ENCODE measurements at regions of chr2 and their contacts with region 1.

Region 1: DNA sequence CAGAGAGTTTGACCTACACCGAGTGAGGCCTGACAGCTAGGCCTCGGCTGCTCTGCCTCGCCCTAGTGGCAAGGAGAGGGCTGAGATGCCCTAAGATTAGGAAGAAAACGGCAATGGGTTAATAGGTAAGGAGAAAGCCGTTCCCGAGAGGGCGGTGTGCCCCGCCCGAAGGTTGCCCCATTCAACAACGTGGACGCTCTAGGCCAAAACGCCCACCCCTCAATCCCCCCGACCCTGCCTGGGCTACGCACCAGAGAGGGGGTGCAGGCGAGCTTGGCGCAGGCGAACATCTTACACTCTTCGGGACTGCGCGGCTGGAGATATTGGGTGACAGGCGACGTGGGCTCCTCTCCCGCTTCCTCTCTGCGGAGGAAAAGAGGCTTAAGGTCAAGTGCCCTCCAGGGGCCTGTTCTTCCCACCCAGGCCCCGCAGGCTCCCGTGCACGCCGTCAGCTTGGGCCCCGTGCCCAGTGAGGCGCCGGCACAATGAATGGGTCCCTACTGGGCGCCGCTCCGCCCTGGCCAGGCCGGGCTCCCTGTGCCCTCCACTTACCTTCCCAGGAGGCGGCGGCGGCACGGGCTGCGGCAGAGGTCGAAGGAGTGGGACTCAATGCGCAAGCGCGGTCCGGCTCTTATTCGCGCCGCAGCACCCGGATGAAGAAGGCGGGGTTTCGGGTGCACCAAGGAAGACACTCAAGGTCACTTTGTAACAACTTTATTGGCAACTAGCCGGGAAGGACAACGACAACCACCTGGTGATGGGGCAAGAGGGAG is at the start of gene ATP5MC3:
- DNase-seq: peak; percentile 97
- ATAC-seq: peak; percentile 92
- H3K4me3 Mint-ChIP-seq: peak within 1 kb of the TSS; percentile 93
- H3K27ac Mint-ChIP-seq: peak within 1 kb of the TSS; percentile 95
- H3K4me1 Mint-ChIP-seq: peaks cover 35% of the 10 kb centered on the region
- H3K27me3 Mint-ChIP-seq: no peaks in the 10 kb centered on the region
- CTCF ChIP-seq: peak; percentile 20
- total RNA-seq, gene ATP5MC3: 399 to 401 TPM

Region 2: GRCh38 chr2:175167792-175168563 is 13.3 kb before region 1 on chr2 and contains the start of gene ATF2:
- CTCF ChIA-PET with region 1: interaction called, 15 read pairs
- POLR2A ChIA-PET with region 1: interaction called, 23 read pairs
- intact Hi-C with region 1: no loop called
- DNase-seq: peak; percentile 99
- ATAC-seq: peak; percentile 94
- H3K4me3 Mint-ChIP-seq: peak within 1 kb of the TSS; percentile 89
- H3K27ac Mint-ChIP-seq: peak within 1 kb of the TSS; percentile 99
- H3K4me1 Mint-ChIP-seq: peaks cover 37% of the 10 kb centered on the region
- H3K27me3 Mint-ChIP-seq: no peaks in the 10 kb centered on the region
- CTCF ChIP-seq: no peak
- total RNA-seq, gene ATF2: 42.9 to 48.4 TPM

Region 3: DNA sequence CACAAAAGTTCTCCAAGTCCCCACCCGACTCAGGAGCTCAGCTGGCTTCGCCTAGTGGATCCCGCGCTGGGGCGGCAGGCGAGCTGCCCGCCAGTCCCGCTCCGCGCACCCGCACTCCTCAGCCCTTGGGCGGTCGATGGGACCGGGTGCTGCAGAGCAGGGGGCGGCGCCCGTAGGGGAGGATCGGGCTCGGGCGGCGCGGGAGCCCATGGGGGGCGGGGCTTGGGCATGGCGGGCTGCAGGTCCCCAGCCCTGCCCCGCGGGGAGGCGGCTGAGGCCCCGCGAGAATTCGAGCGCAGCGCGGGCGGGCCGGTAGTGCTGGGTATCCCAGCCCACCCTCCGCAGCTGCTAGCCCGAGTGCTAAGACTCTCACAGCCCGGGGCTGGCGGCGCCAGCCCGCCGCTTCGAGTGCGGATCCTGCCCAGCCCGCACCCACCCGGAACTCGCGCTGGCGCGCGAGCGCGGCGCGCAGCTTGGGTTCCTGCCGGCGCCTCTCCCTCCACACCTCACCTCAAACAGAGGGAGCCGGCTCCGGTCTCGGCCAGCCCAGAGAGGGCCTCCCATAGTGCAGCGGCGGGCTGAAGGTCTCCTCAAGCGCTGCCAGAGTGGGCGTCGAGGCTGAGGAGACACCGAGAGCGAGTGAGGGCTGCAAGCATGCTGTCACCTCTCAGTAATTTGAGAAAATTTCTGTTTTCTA is 75.7 kb after region 1 on chr2:
- CTCF ChIA-PET with region 1: no interaction called
- POLR2A ChIA-PET with region 1: no interaction called
- intact Hi-C with region 1: no loop called
- DNase-seq: no peak
- ATAC-seq: no peak
- H3K4me3 Mint-ChIP-seq: no peak overlapping the region
- H3K27ac Mint-ChIP-seq: no peak overlapping the region
- H3K4me1 Mint-ChIP-seq: no peaks in the 10 kb centered on the region
- H3K27me3 Mint-ChIP-seq: peaks cover 19% of the 10 kb centered on the region
- CTCF ChIP-seq: no peak

Region 4: GRCh38 chr2:175468431-175469098 is 287.3 kb after region 1 on chr2:
- CTCF ChIA-PET with region 1: no interaction called
- POLR2A ChIA-PET with region 1: no interaction called
- intact Hi-C with region 1: no loop called
- DNase-seq: no peak
- ATAC-seq: no peak
- H3K4me3 Mint-ChIP-seq: no peak overlapping the region
- H3K27ac Mint-ChIP-seq: no peak overlapping the region
- H3K4me1 Mint-ChIP-seq: no peaks in the 10 kb centered on the region
- H3K27me3 Mint-ChIP-seq: no peaks in the 10 kb centered on the region
- CTCF ChIP-seq: no peak

Measured in activated CD8-positive, alpha-beta T cell treated with anti-CD3 and anti-CD28 coated beads for 36 hours (primary cell).